GM13976 (cell line): ENCODE measurements at regions of chr21 and their contacts with region 1.

Region 1: GRCh38 chr21:31580866-31581276 is 78.6 kb upstream of the SOD1 start:
- DNase-seq: peak; percentile 62
- CTCF ChIP-seq: peak; percentile 74

Region 2: DNA sequence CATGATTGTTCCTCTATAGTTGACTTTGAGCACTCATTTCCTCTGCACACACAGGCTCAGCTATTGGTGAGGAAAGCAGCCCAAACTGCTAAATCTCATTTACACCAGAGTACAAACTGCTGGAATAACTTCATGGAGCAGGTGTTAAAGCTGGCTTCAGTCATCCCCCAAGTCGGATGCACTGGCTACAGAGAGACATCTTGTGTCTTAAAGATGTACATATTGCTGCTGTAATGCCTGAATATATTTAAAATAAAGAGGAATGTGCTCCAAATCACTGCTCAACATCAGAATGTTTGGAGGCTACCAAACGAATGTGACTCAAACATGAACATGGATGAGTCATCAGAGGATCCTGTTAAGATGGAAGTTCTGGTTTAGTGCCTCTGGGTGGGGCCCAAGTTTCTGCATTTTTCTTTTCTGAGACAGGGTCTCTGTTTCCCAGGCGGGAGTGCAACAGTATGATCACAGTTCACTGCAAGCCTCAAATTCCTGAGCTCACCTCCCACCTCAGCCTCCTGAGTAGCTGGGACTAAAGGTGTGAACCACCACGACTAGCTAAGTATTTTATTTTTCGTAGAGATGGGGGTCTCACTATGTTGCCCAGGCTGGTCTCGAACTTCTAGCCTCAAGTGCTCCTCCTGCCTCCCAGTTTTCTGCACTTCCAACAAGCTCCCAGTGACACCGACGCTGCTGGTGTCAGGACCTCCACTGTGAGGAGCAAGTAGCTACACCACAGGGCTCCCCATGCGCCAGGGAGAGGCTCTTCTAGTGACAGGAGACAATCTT is 463.5 kb before region 1 on chr21:
- in situ Hi-C with region 1: loop called (anchors 10 kb)
- DNase-seq: no peak
- CTCF ChIP-seq: no peak

Region 3: DNA sequence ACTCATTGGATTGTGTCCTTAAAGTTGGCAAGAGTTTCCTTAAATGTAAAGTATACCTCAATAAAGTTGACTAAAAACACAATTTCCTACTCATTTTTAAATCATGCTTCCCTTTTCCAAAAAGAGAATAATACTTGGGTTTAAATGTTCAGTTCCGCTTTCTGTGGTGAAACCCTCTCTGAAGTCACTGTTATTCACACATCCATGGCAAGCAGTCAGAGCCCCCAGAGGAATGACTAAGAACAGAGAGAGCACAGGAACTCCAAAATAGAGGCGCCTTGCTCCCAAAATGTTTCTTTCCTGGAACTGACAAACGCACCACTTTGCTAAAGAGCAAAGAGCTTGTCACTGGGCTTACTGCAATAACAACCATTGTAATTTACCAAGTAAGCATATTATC is 379.3 kb before region 1 on chr21:
- in situ Hi-C with region 1: loop called (anchors 10 kb)
- DNase-seq: no peak
- CTCF ChIP-seq: no peak